Sciatic nerve (tissue), 2 donors: ENCODE measurements at regions of chr13 and their contacts with region 1.

Region 1: DNA sequence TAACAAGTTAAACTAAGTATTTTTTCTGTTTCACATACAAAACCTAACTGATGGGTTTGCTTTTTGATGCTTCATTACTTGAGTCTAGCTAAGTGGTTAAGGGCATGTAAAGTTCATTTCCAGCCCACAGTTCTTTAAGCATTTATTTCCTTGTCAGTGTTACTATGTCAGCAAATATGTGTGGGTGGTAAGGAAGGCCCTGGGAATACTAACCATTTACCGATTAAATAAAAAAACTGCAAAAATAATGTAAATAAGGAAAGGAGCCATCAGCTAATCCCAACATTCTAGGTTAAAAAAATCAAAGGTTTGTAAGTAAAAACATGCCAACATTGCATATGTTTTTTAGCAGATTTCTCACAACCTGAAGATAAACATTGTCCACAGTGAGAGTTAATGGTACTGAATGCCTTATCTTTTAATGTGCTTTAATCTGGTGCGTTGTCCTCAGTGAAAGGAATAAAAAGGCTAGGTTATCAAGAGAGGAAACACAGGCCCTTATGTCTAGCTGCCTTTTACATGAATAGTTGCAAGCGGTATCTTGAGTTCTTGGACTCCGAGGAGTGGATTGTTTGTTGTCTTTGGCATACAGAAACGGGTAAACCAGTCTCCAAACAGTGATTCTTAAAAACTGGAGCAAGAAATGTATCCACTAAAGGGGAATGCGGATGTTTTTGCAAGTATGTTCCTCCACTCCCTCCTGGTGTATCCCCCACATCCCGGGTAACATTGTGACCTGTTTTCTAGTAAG is 949.6 kb upstream of the SLC10A2 start:
- DNase-seq: no peak
- ATAC-seq: peak; percentile 70

Region 2: DNA sequence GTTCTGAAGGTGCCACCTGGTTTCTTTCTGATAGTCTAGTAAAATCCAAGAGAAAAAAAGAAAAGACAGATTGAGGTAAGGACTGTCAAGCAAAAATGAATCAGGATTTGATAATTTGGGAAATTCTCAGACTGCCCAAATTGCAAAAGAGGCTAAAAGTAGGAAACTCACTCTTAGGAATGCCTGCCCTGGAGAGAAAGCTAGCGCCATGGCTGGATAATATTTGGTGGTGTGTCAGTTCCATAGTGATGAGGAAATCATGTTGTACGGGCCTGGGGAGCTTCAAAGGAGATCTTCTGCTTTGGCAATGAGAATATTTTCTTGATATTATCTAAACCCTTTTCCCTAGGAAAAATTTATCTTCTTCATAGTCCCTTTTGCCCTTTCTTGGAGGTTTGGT is 58.5 kb after region 1 on chr13:
- intact Hi-C with region 1: loop called (anchors 2 kb)
- DNase-seq: no peak
- ATAC-seq: no peak